Activated naive CD4-positive, alpha-beta T cell treated with anti-CD3 and anti-CD28 coated beads for 36 hours (primary cell): ENCODE measurements at regions of chr13 and their contacts with region 1.

Region 1: GRCh38 chr13:76828316-76828741 is 57.9 kb downstream of the KCTD12 start:
- DNase-seq: peak; percentile 60
- H3K4me3 Mint-ChIP-seq: no peak overlapping the region
- H3K27ac Mint-ChIP-seq: peak overlapping the region; percentile 69
- H3K4me1 Mint-ChIP-seq: peaks cover 12% of the 10 kb centered on the region
- H3K27me3 Mint-ChIP-seq: no peaks in the 10 kb centered on the region

Region 2: GRCh38 chr13:76667551-76667950 is 160.8 kb before region 1 on chr13:
- CTCF ChIA-PET with region 1: no interaction called
- intact Hi-C with region 1: loop called (anchors 1 kb)
- DNase-seq: peak; percentile 40
- H3K4me3 Mint-ChIP-seq: no peak overlapping the region
- H3K27ac Mint-ChIP-seq: no peak overlapping the region
- H3K4me1 Mint-ChIP-seq: peaks cover 7% of the 10 kb centered on the region
- H3K27me3 Mint-ChIP-seq: no peaks in the 10 kb centered on the region

Region 3: GRCh38 chr13:76848596-76848995 is 20.3 kb after region 1 on chr13:
- CTCF ChIA-PET with region 1: no interaction called
- intact Hi-C with region 1: loop called (anchors 2 kb)
- DNase-seq: no peak
- H3K4me3 Mint-ChIP-seq: no peak overlapping the region
- H3K27ac Mint-ChIP-seq: no peak overlapping the region
- H3K4me1 Mint-ChIP-seq: no peaks in the 10 kb centered on the region
- H3K27me3 Mint-ChIP-seq: no peaks in the 10 kb centered on the region

Region 4: GRCh38 chr13:76879203-76879882 is 51.0 kb after region 1 on chr13:
- CTCF ChIA-PET with region 1: interaction called, 17 read pairs
- intact Hi-C with region 1: loop called (anchors 1 kb)
- DNase-seq: peak; percentile 86
- H3K4me3 Mint-ChIP-seq: peak overlapping the region; percentile 63
- H3K27ac Mint-ChIP-seq: peak overlapping the region; percentile 85
- H3K4me1 Mint-ChIP-seq: peaks cover 39% of the 10 kb centered on the region
- H3K27me3 Mint-ChIP-seq: no peaks in the 10 kb centered on the region

Region 5: DNA sequence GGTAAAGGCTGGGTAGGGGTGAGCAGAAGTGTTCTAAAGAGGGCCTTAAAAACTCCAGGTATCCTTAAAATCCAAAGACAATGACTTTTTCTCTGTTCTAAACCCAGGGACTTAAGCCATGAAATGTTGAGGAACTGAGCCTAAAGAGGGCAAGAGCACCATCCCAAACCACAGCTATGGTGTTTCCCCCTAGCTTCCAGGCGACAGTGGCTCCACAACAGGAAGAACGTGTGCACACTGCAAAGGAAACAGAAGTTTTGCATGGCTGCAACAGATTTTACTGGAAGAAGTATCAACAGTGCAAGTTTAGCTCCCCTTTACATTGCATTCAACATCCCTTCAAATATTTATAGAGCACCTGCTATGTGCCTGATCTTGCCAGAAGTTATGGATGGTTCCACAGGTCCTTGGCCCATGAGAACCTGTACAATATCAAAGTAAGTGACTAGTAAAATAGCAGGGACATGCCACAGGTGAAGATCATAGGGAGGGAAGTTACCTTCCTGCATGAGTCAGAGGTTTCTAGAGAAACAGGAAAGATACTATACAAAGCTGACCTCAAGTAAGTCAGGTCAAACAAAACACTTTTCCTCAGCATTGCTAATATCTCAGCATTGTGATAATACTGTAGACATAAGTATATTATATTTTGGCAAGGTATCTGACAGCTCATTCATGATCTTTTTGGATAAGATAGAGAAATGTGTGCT is 66.2 kb after region 1 on chr13:
- CTCF ChIA-PET with region 1: interaction called, 8 read pairs
- intact Hi-C with region 1: loop called (anchors 1 kb)
- DNase-seq: peak; percentile 15
- H3K4me3 Mint-ChIP-seq: no peak overlapping the region
- H3K27ac Mint-ChIP-seq: no peak overlapping the region
- H3K4me1 Mint-ChIP-seq: peaks cover 16% of the 10 kb centered on the region
- H3K27me3 Mint-ChIP-seq: no peaks in the 10 kb centered on the region

Region 6: DNA sequence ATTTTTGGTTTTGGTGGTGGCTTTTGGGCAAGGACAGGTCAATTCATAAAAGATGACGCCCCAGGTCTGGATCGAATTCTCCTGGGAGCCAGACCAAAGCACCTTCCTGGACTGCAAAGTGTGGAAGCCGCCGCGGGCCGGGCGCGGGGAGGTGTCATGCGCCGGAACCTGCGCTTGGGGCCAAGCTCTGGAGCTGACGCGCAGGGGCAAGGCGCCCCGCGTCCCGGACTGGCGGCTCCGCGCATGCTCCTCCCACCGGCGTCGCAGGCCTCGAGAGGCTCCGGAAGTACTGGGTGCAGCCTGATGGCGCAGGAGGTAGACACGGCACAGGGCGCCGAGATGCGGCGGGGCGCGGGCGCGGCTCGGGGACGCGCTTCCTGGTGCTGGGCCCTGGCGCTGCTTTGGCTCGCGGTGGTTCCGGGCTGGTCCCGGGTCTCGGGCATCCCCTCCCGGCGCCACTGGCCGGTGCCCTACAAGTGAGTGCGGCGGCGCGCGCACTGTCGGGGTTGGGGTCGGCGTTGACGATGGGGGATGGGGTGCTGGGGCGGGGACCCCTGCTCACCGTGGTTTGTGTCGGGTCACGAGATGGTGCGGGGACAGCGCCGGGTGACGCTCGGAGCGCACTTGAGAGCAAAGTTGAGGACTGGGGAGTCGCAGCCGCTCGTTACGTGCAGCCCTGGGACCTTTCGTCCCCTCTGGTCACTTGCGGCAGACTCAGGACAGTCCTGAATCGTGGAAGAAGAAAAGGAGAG is 163.6 kb after region 1 on chr13 and contains the start of gene CLN5:
- CTCF ChIA-PET with region 1: no interaction called
- intact Hi-C with region 1: loop called (anchors 1 kb)
- DNase-seq: peak; percentile 95
- H3K4me3 Mint-ChIP-seq: peak within 1 kb of the TSS; percentile 95
- H3K27ac Mint-ChIP-seq: peak within 1 kb of the TSS; percentile 97
- H3K4me1 Mint-ChIP-seq: peaks cover 39% of the 10 kb centered on the region
- H3K27me3 Mint-ChIP-seq: no peaks in the 10 kb centered on the region
- total RNA-seq, gene CLN5: 13.6 to 14.6 TPM

Region 7: GRCh38 chr13:77291774-77292173 is 463.4 kb after region 1 on chr13:
- CTCF ChIA-PET with region 1: no interaction called
- intact Hi-C with region 1: loop called (anchors 2 kb)
- DNase-seq: no peak
- H3K4me3 Mint-ChIP-seq: no peak overlapping the region
- H3K27ac Mint-ChIP-seq: peak overlapping the region; percentile 3
- H3K4me1 Mint-ChIP-seq: peaks cover 38% of the 10 kb centered on the region
- H3K27me3 Mint-ChIP-seq: no peaks in the 10 kb centered on the region